Caco-2 (cell line): ENCODE measurements at regions of chr17 and their contacts with region 1.

Region 1: GRCh38 chr17:78112518-78113226 is 15.9 kb downstream of the TMC6 start:
- DNase-seq: peak; percentile 78 to 92
- H3K4me3 ChIP-seq: no peak overlapping the region
- H3K4me3 Mint-ChIP-seq: no peak overlapping the region
- H3K27ac Mint-ChIP-seq: peak overlapping the region; percentile 1
- H3K4me1 ChIP-seq: peaks cover 4% of the 10 kb centered on the region; the same call in 1 of the 2 replicates
- H3K4me1 Mint-ChIP-seq: peaks cover 6% of the 10 kb centered on the region
- H3K27me3 ChIP-seq: no peaks in the 10 kb centered on the region
- H3K27me3 Mint-ChIP-seq: no peaks in the 10 kb centered on the region
- CTCF ChIP-seq: peak; percentile 99

Region 2: GRCh38 chr17:78044280-78044835 is 68.3 kb before region 1 on chr17:
- CTCF ChIA-PET with region 1: no interaction called
- POLR2A ChIA-PET with region 1: no interaction called
- intact Hi-C with region 1: no loop called
- DNase-seq: no peak
- H3K4me3 ChIP-seq: no peak overlapping the region
- H3K4me3 Mint-ChIP-seq: no peak overlapping the region
- H3K27ac Mint-ChIP-seq: no peak overlapping the region
- H3K4me1 ChIP-seq: peaks cover 9% of the 10 kb centered on the region
- H3K4me1 Mint-ChIP-seq: peaks cover 5% of the 10 kb centered on the region
- H3K27me3 ChIP-seq: no peaks in the 10 kb centered on the region
- H3K27me3 Mint-ChIP-seq: no peaks in the 10 kb centered on the region
- CTCF ChIP-seq: no peak

Region 3: DNA sequence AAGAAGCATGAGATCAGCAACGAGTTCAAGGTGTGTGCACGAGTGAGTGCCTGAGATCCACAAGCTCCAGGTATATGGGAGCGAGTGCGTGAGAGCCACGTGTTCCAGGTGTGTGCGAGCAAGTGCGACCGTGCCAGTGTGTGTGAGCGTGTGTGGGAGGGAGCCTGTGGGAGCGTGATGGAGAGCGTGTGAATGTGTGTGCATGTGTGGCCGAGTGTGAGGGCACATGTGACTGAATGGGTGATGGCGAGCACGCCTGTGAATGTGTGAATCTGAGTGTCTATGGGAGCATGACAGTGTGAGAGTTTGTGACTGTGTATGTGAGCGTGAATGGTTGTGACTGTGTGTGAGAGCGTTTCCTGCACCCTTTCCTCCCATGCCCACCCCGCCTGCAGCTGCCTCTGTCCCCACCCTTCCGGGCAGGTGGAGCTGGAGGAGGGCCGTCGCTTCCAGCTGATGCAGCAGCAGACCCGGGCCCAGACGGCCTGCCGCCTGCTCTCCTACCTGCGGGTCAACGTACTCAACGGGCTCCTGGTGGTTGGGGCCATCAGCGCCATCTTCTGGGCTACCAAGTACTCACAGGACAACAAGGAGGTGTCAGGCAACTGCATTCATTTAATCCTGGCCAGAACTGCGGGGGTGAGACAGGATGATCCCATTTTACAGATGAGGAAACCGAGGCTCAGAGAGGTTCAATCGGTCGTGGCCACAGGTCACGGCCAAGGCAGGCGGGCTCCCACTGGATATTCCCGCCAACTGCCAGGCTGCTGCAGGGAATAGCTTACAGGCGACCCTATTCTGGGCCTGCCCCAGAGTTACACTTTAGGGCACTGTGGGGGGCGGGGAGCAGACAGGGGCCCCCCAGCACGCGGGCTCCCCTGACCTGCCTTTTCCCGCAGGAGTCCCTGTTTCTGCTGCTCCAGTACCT is 21.6 kb after region 1 on chr17:
- CTCF ChIA-PET with region 1: no interaction called
- POLR2A ChIA-PET with region 1: no interaction called
- intact Hi-C with region 1: loop called (anchors 1 kb)
- DNase-seq: peak; percentile 71 to 78
- H3K4me3 ChIP-seq: no peak overlapping the region
- H3K4me3 Mint-ChIP-seq: no peak overlapping the region
- H3K27ac Mint-ChIP-seq: no peak overlapping the region
- H3K4me1 ChIP-seq: 0 out of 2 replicates have a peak, but pooled peaks cover 7% of the 10 kb centered on the region
- H3K4me1 Mint-ChIP-seq: peaks cover 7% of the 10 kb centered on the region
- H3K27me3 ChIP-seq: no peaks in the 10 kb centered on the region
- H3K27me3 Mint-ChIP-seq: no peaks in the 10 kb centered on the region
- CTCF ChIP-seq: peak; percentile 33 to 43

Region 4: GRCh38 chr17:78176548-78177025 is 63.9 kb after region 1 on chr17:
- CTCF ChIA-PET with region 1: interaction called, 7 read pairs
- POLR2A ChIA-PET with region 1: no interaction called
- intact Hi-C with region 1: loop called (anchors 1 kb)
- DNase-seq: peak in 1 of 2 experiments; percentile 79
- H3K4me3 ChIP-seq: no peak overlapping the region
- H3K4me3 Mint-ChIP-seq: no peak overlapping the region
- H3K27ac Mint-ChIP-seq: peak overlapping the region; percentile 75
- H3K4me1 ChIP-seq: peaks cover 14% of the 10 kb centered on the region; the same call in 1 of the 2 replicates
- H3K4me1 Mint-ChIP-seq: peaks cover 24% of the 10 kb centered on the region
- H3K27me3 ChIP-seq: no peaks in the 10 kb centered on the region
- H3K27me3 Mint-ChIP-seq: no peaks in the 10 kb centered on the region
- CTCF ChIP-seq: peak; percentile 85 to 86